Activated CD8-positive, alpha-beta T cell treated with anti-CD3 and anti-CD28 coated beads, Interleukin-2, amount 10 ng/mL, durations not matched to agents 7 days and 5 days (primary cell): ENCODE measurements at regions of chr1 and their contacts with region 1.

Region 1: DNA sequence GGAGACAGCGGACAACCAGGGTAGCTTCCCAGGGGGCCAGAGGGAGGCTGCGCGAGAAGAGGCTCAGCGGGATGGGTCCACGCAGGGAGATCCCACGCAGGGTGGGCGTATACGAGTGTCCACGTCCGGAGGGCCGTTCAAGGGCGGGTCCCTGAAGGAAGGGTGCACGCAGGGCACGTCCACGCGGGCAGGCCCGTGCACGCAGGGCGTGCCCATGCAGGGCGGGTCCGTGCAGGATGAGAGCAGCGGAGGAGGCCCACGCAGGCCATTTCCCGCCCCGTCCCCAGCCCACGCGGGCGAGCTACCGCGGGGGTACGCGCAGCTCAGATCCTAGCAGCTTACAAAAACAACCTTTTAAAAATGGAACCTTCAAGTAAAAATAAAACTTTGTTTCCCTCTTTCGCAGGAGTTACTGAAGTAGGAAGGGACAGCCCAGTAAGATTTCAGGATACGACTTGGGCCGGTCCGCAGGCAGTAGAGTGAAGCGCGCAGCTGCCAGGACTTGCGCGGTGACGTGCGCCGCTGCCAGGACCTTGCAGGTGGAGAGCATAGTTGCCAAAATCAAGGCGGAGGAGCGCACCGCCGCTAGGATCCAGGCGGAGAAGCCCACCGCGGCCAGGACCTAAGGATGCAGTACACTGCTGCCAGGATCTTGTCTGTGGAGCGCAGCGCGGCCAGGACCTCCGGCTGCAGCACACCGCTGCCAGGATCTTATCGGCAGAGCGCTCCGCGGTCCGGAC is 416 bp upstream of the RNF187 start:
- DNase-seq: peak; percentile 86
- ATAC-seq: peak; percentile 71
- H3K4me3 Mint-ChIP-seq: peak overlapping the region; percentile 88
- H3K27ac Mint-ChIP-seq: peak overlapping the region; percentile 100
- H3K4me1 Mint-ChIP-seq: peaks cover 58% of the 10 kb centered on the region
- H3K27me3 Mint-ChIP-seq: no peaks in the 10 kb centered on the region

Region 2: GRCh38 chr1:228405987-228406265 is 80.8 kb before region 1 on chr1:
- CTCF ChIA-PET with region 1: no interaction called
- POLR2A ChIA-PET with region 1: interaction called, 12 read pairs
- DNase-seq: peak; percentile 42
- ATAC-seq: peak; percentile 4
- H3K4me3 Mint-ChIP-seq: peak overlapping the region; percentile 90
- H3K27ac Mint-ChIP-seq: peak overlapping the region; percentile 95
- H3K4me1 Mint-ChIP-seq: peaks cover 53% of the 10 kb centered on the region
- H3K27me3 Mint-ChIP-seq: no peaks in the 10 kb centered on the region

Region 3: DNA sequence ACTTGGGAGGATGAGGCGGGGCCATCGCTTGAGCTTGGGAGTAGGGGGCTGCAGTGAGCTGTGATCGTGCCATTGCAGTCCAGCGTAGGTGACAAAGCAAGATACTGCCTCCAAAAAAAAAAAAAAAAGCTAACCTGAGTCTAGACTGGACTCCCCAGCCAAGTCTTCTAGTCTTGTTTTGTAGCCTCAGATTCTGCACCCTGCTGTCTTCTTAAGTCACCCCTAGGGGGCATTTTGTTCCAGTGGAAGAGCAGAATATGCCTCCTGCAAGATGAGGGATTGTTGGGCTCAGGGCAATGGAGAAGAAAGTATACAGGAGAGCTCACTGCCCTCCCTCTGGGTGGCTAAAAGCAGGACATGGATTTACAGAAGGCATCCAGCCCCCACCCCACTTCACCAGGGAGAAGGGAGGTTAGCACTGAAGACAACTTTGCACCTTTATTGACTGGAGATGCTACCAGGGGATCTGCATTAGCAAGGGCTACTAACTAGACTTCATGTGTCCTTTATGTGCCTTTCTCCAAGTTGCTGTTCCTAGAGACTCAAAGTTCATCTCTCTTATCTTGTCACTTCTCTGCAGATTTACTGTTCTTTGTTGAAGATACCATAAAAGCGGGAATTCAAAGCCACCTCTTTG is 14.9 kb before region 1 on chr1:
- CTCF ChIA-PET with region 1: interaction called, 47 read pairs
- POLR2A ChIA-PET with region 1: interaction called, 16 read pairs
- DNase-seq: peak; percentile 64
- ATAC-seq: peak; percentile 85
- H3K4me3 Mint-ChIP-seq: no peak overlapping the region
- H3K27ac Mint-ChIP-seq: peak overlapping the region; percentile 37
- H3K4me1 Mint-ChIP-seq: peaks cover 43% of the 10 kb centered on the region
- H3K27me3 Mint-ChIP-seq: peaks cover 7% of the 10 kb centered on the region